ENCODE measurements at regions of chr13 and their contacts with region 1.

Region 1: GRCh38 chr13:30443957-30444404 is 21.7 kb downstream of the UBE2L5 start:
- DNase-seq: no peak
- ATAC-seq: no peak

Region 2: GRCh38 chr13:30422054-30422839 is 21.7 kb before region 1 on chr13 and contains the start of gene UBE2L5:
- intact Hi-C with region 1: loop called (anchors 2 kb)
- DNase-seq: peak; percentile 93
- ATAC-seq: peak; percentile 92
- total RNA-seq, gene UBE2L5: not detected

Measured in Right ventricle myocardium inferior (tissue), 1 donor.